ENCODE measurements at regions of chr5 and their contacts with region 1.

Region 1: DNA sequence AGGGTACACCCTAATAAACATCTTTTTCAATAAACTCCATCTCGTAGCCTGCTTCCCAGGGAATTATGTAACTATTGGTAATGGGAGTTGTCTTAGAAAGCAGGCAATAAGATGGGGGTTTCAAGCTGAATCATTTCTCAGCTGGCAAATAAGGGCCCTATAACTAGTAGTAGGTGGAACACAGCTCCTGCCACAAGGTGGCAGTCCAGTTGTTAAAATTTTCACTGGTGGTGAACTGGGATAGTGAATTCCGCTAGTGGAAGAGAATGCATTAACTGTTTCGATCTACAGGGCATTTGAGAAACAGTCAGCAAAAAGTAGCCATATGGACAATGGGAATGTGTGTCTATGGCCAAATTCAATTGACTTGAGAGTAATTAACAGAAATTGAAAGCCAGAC is 27.7 kb downstream of the PCDHB15 start:
- DNase-seq: peak; percentile 3 to 44
- H3K4me3 ChIP-seq: no peak overlapping the region
- H3K27ac ChIP-seq: no peak overlapping the region
- H3K4me1 ChIP-seq: no peaks in the 10 kb centered on the region
- H3K27me3 ChIP-seq: no peaks in the 10 kb centered on the region
- CTCF ChIP-seq: peak in 2 of 3 experiments; percentile 41 to 49; a peak in 2 of 4 replicates
- EP300 ChIP-seq: no peak
- POLR2A ChIP-seq: no peak
- RAD21 ChIP-seq: peak; percentile 37 to 49; a peak in 3 of 4 replicates

Region 2: DNA sequence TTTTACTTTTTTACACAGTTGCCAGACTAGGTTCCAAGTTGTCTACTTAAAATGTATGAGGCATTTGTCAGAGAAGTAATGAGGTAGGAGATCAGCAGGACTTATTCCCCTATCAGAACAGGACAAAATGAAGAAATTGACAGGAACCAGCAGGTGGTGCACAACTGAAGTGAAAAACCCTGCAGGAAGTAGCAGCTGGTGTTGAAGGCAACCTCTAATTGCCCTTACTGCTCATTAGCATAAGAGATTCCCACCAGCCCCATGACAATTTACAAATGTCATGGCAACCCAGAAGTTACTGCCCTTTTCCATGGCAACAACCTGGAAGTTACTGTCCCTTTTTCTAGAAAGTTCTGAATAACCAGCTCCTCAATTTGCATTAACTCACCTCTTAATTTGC is 22.3 kb before region 1 on chr5:
- CTCF ChIA-PET with region 1: interaction called, 35 read pairs
- POLR2A ChIA-PET with region 1: interaction called, 3 read pairs
- DNase-seq: no peak
- H3K4me3 ChIP-seq: no peak overlapping the region
- H3K27ac ChIP-seq: no peak overlapping the region
- H3K4me1 ChIP-seq: peaks cover 0 to 3% (median 0%) of the 10 kb centered on the region in 4 experiments; a peak in 1 of 7 replicates
- H3K27me3 ChIP-seq: peaks cover 0 to 2% (median 0%) of the 10 kb centered on the region in 4 experiments; a peak in 1 of 7 replicates
- CTCF ChIP-seq: no peak
- EP300 ChIP-seq: no peak
- POLR2A ChIP-seq: no peak
- RAD21 ChIP-seq: no peak

Region 3: DNA sequence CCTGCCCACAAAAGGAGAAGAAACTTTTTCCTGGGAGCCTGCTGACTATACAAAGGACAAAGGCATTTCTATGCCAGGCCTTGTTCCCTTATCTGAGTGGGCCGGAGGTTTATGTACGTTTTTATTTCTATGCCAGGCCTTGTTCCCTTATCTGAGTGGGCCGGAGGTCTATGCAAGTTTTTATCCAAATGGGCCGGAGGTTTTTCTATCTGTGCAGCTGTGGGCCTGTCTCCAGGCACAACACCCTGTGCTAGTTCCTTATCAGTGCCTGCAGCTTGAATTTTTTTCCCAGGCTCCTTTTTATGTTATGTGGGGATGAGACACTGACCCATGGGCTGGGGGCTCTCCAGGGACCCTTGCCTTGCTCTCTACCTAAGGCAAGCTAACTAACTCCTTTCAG is 25.5 kb after region 1 on chr5:
- CTCF ChIA-PET with region 1: interaction called, 11 read pairs
- POLR2A ChIA-PET with region 1: no interaction called
- DNase-seq: no peak
- H3K4me3 ChIP-seq: no peak overlapping the region
- H3K27ac ChIP-seq: no peak overlapping the region
- H3K4me1 ChIP-seq: no peaks in the 10 kb centered on the region
- H3K27me3 ChIP-seq: no peaks in the 10 kb centered on the region
- CTCF ChIP-seq: no peak
- EP300 ChIP-seq: no peak
- POLR2A ChIP-seq: no peak
- RAD21 ChIP-seq: no peak

Region 4: DNA sequence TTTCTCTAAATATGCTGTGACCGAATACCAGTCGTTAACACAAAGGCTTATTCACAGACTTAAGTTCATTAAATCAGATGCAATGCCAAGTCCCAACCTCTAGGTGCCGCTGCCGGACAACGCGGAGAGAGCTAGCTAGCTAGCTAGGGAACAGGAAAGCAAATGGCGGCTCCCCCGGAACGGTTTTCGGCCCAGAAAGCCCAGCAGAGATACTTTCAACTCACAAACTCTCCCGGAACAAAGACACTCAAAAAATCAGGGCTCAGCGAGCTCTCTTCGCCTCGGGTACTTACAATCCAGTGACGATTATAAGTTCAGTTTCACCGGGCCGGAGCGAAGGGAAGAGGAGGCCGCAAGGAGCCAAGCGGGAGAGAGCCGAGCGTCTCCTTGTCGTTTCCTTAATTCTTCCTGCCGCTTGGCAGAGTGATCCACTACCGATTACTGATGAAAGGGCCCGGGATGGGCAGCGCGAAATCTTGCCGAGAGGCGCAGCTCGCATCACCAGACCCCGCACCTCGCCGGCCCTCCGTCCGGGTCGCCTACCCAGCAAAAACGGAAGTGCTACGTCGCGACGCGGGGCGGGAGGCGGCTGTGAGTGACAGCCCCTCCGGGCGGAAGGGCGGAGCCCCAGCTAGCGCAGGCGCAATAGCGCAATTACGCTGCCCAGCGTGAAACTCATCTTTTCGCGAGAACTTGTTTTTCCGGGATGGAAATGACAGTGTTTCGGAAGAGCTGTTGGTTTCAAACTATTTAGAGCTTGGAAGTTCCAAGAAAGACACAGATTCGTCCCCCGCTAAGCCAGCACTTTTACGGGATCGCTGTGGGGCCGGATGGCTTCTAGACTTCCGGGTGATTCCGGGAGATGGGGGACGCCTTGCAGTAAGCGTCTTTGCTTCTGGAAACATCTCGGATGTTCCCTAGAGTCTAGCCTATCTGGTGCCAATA is 47.6 kb after region 1 on chr5 and contains the start of gene TAF7:
- CTCF ChIA-PET with region 1: interaction called, 26 read pairs
- POLR2A ChIA-PET with region 1: interaction called, 4 read pairs
- DNase-seq: peak; percentile 77 to 95
- H3K4me3 ChIP-seq: peak within 1 kb of the TSS; percentile 79 to 99 (median 92)
- H3K27ac ChIP-seq: peak within 1 kb of the TSS; percentile 95
- H3K4me1 ChIP-seq: no peaks in the 10 kb centered on the region
- H3K27me3 ChIP-seq: no peaks in the 10 kb centered on the region
- CTCF ChIP-seq: peak; percentile 77 to 93 (median 80)
- EP300 ChIP-seq: no peak
- POLR2A ChIP-seq: peak; percentile 95 to 98
- RAD21 ChIP-seq: peak; percentile 45 to 57
- total RNA-seq, gene TAF7: 99.4 and 101 TPM in 2 replicates

Region 5: DNA sequence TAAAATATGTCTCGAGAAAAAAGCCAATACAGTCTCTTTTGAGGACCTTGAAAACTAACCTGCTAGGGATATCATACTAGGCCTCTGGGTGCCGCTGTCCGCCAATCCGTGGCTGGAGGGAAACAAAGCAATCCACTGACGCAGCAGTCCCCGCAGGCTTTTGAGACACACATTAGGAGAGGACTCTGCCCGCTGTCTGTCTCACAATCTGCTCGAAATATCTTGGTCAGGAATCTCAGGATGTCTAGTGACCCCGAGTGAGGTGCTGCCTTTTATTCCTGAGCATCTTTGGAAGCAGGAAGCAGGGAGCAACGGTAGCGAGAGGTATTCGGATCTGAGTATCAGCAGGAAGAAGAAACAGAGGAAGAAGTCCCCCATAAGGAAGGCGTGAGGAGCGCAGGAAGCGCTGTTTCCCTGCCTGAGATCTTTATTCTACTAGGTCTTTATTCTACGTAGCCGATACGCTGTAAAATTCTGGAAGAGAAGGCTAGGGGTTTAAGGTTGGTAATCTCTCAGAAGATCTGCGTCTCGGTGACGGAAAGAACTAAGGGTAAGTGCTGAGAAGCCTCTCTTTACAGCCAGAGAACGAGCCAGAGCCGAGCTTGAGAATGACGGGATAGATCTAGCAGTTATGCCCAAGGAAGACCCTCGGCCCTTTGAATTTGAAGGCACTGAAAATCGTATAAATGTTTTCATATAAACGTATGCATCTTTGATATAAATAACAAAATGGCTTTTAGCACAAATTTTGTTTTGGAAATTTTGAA is 53.4 kb after region 1 on chr5:
- CTCF ChIA-PET with region 1: interaction called, 26 read pairs
- POLR2A ChIA-PET with region 1: no interaction called
- DNase-seq: peak in 1 of 2 experiments; percentile 73
- H3K4me3 ChIP-seq: peak overlapping the region; percentile 31 to 54 (median 50)
- H3K27ac ChIP-seq: no peak overlapping the region
- H3K4me1 ChIP-seq: no peaks in the 10 kb centered on the region
- H3K27me3 ChIP-seq: no peaks in the 10 kb centered on the region
- CTCF ChIP-seq: peak; percentile 58 to 74 (median 71)
- EP300 ChIP-seq: no peak
- POLR2A ChIP-seq: peak in 1 of 2 experiments; percentile 56; a peak in 1 of 3 replicates
- RAD21 ChIP-seq: peak; percentile 47 to 63